Activated CD8-positive, alpha-beta memory T cell treated with anti-CD3 and anti-CD28 coated beads, Interleukin-2, amount 10 ng/mL, durations not matched to agents 7 days and 5 days (primary cell): ENCODE measurements at regions of chr5 and their contacts with region 1.

Region 1: DNA sequence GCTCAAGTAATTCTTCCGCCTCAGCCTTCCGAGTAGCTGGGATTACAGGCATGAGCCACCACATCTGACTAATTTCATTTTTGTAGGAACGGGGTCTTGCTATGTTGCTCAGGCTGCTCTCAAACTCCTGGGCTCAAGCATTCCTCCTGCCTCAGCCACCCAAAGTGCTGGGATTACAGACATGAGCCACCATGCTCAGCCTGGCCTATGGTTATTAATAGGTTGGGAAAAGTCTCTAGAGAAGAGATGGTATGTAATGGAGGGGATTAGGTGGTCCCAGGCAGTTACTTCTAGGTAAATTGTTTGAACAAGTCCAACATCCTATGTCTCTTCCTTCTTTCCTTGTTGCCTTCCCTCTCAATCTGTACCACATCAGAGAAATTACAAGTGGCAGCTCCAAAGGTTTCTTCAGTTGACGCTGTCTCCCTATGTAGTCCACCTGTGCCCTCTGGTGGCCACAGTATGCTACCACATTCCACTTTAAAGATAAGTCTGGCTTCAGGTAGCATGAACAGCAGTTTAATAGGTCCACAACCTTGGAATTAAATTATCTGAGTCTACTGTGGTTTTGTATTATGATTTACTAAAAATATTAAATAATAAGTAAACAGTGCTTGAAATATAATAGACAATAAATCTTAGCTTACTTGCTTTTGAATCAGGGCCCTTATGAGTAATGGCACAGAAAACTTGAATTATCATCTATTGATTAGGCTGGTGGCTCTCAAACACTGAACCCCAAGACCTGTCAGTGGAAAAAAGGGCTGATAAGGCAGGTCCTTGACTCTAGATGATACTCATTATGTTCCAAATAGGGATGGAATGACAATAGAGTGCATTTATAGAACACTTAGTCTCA is 9.7 kb downstream of the TIGD6 start:
- DNase-seq: peak; percentile 80
- ATAC-seq: peak; percentile 86
- H3K4me3 Mint-ChIP-seq: no peak overlapping the region
- H3K27ac Mint-ChIP-seq: no peak overlapping the region
- H3K4me1 Mint-ChIP-seq: peaks cover 3% of the 10 kb centered on the region
- H3K27me3 Mint-ChIP-seq: no peaks in the 10 kb centered on the region

Region 2: GRCh38 chr5:149636851-149637246 is 353.9 kb before region 1 on chr5:
- CTCF ChIA-PET with region 1: interaction called, 12 read pairs
- DNase-seq: peak; percentile 73
- ATAC-seq: peak; percentile 66
- H3K4me3 Mint-ChIP-seq: no peak overlapping the region
- H3K27ac Mint-ChIP-seq: no peak overlapping the region
- H3K4me1 Mint-ChIP-seq: peaks cover 13% of the 10 kb centered on the region
- H3K27me3 Mint-ChIP-seq: no peaks in the 10 kb centered on the region

Region 3: GRCh38 chr5:149834246-149834855 is 156.4 kb before region 1 on chr5:
- CTCF ChIA-PET with region 1: interaction called, 123 read pairs
- DNase-seq: peak; percentile 71
- ATAC-seq: peak; percentile 50
- H3K4me3 Mint-ChIP-seq: no peak overlapping the region
- H3K27ac Mint-ChIP-seq: no peak overlapping the region
- H3K4me1 Mint-ChIP-seq: peaks cover 6% of the 10 kb centered on the region
- H3K27me3 Mint-ChIP-seq: no peaks in the 10 kb centered on the region